Activated naive CD4-positive, alpha-beta T cell treated with anti-CD3 and anti-CD28 coated beads, Interleukin-2, amount 10 ng/mL, durations not matched to agents 7 days and 5 days (primary cell): ENCODE measurements at regions of chr6 and their contacts with region 1.

Region 1: DNA sequence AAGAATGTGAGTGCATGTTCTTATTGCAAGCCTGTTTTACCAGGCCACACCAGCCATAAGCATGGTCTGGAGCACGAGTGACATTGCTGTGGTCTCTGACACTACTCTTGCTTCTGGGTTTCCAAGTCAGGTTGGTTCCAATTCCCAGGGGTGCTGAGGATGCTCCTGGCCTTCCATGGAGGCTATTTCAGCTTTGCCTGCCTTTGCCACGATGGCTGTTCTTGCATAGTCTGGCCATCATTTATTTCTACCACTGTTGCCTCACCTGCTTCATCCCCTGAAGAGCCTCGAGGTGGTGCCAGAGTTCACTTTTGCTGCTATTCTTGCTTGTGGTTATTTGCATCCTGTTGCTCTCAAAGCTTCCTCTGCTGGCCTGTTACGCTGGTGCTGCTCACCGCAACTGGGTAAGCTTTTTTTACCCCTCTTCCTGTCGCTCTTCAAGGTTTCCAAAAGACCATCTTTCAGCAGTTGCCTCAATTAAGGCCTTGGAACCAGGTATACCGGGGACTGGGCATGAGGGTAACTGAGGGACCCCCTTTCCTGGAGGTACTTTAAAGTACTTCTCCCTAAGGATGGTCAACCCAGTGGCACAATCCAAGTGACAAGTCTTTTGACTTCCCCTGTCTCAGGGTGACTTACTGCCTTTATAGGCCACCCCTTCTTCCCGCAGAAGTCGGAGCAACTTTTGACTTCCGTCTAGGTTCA is 64.5 kb downstream of the AKAP7 start:
- DNase-seq: peak; percentile 85
- H3K4me3 Mint-ChIP-seq: peak overlapping the region; percentile 72
- H3K27ac Mint-ChIP-seq: peak overlapping the region; percentile 97
- H3K4me1 Mint-ChIP-seq: peaks cover 63% of the 10 kb centered on the region
- H3K27me3 Mint-ChIP-seq: no peaks in the 10 kb centered on the region

Region 2: GRCh38 chr6:131519670-131520436 is 320.1 kb after region 1 on chr6:
- CTCF ChIA-PET with region 1: interaction called, 22 read pairs
- DNase-seq: peak; percentile 65
- H3K4me3 Mint-ChIP-seq: no peak overlapping the region
- H3K27ac Mint-ChIP-seq: no peak overlapping the region
- H3K4me1 Mint-ChIP-seq: peaks cover 17% of the 10 kb centered on the region
- H3K27me3 Mint-ChIP-seq: no peaks in the 10 kb centered on the region